ENCODE measurements at regions of chr6 and their contacts with region 1.

Region 1: GRCh38 chr6:29737707-29738630 is 14.7 kb downstream of the HLA-F start:
- DNase-seq: peak in 4 of 5 donors; percentile 63 to 73 (median 68)
- ATAC-seq: peak; percentile 68 to 89 (median 88)
- H3K4me3 ChIP-seq: no peak overlapping the region
- H3K27ac ChIP-seq: peak overlapping the region in 1 of 12 donors; percentile 5
- H3K4me1 ChIP-seq: peaks cover 0 to 19% (median 5%) of the 10 kb centered on the region in 12 donors
- H3K27me3 ChIP-seq: no peaks in the 10 kb centered on the region
- CTCF ChIP-seq: peak; percentile 43 to 83 (median 70)
- POLR2A ChIP-seq: no peak

Region 2: GRCh38 chr6:29723262-29723665 is 14.7 kb before region 1 on chr6 and contains the start of gene HLA-F:
- intact Hi-C with region 1: loop called in 1 of 10 experiments (anchors 1 kb)
- DNase-seq: peak; percentile 86 to 92 (median 89)
- ATAC-seq: peak; percentile 95 to 99 (median 98)
- H3K4me3 ChIP-seq: peak within 1 kb of the TSS; percentile 63 to 98 (median 88)
- H3K27ac ChIP-seq: peak within 1 kb of the TSS; percentile 80 to 97 (median 92)
- H3K4me1 ChIP-seq: peaks cover 0 to 35% (median 16%) of the 10 kb centered on the region in 12 donors
- H3K27me3 ChIP-seq: no peaks in the 10 kb centered on the region
- CTCF ChIP-seq: peak in 1 of 12 donors; percentile 8
- POLR2A ChIP-seq: peak; percentile 69 to 82
- total RNA-seq, gene HLA-F: 23.1 to 228 (median 34.7) TPM